ENCODE measurements at regions of chr3 and their contacts with region 1.

Region 1: DNA sequence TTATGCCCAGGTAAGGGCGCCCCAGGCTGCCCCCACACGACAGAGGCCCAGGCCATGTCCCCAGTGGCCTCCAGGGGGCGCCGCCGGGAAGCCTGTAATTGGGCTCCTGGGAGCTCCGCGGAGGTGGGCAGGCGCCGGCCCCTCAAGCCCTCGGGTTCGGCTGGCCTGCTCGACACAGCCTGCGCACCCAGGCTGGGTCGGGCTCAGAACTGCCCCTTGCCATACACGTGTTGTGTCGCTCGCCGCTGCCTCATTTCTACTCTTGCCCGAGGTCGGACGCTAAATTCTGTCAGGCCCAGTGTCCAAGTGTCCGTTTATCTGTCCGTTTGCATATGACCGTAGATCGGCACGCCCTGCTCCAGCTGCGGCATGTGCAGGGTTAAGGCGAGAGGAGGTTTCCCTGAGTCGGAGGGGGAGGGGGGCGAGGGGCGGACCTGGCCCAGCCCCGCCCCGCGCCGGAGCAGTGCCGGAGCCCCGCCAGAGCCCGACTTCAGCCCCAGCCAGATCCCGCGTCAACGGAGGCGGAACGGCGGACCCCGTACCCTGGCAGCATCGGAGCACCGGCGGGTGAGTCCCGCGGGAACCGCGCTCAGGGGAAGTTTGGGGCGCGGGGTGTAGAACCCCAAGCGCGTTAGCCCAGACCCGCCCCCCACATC is at the start of gene KLHDC8B:
- DNase-seq: peak; percentile 68 to 90 (median 84)
- ATAC-seq: peak; percentile 85
- H3K4me3 ChIP-seq: peak within 1 kb of the TSS; percentile 72 to 88
- H3K4me3 Mint-ChIP-seq: peak within 1 kb of the TSS; percentile 89
- H3K27ac ChIP-seq: peak within 1 kb of the TSS; percentile 3 to 40
- H3K27ac Mint-ChIP-seq: peak within 1 kb of the TSS; percentile 79
- H3K4me1 ChIP-seq: peaks cover 24% of the 10 kb centered on the region
- H3K4me1 Mint-ChIP-seq: peaks cover 25% of the 10 kb centered on the region
- H3K27me3 ChIP-seq: no peaks in the 10 kb centered on the region
- H3K27me3 Mint-ChIP-seq: no peaks in the 10 kb centered on the region
- CTCF ChIP-seq: peak; percentile 97
- total RNA-seq, gene KLHDC8B: 1.1 to 1.6 TPM

Region 2: GRCh38 chr3:49158108-49158709 is 13.0 kb before region 1 on chr3:
- CTCF ChIA-PET with region 1: interaction called, 16 read pairs
- POLR2A ChIA-PET with region 1: interaction called, 3 read pairs
- intact Hi-C with region 1: no loop called
- DNase-seq: peak; percentile 36 to 77 (median 65)
- ATAC-seq: peak; percentile 98
- H3K4me3 ChIP-seq: no peak overlapping the region
- H3K4me3 Mint-ChIP-seq: no peak overlapping the region
- H3K27ac ChIP-seq: no peak overlapping the region
- H3K27ac Mint-ChIP-seq: peak overlapping the region; percentile 85
- H3K4me1 ChIP-seq: no peaks in the 10 kb centered on the region
- H3K4me1 Mint-ChIP-seq: peaks cover 5% of the 10 kb centered on the region
- H3K27me3 ChIP-seq: no peaks in the 10 kb centered on the region
- H3K27me3 Mint-ChIP-seq: no peaks in the 10 kb centered on the region
- CTCF ChIP-seq: peak; percentile 61

Region 3: DNA sequence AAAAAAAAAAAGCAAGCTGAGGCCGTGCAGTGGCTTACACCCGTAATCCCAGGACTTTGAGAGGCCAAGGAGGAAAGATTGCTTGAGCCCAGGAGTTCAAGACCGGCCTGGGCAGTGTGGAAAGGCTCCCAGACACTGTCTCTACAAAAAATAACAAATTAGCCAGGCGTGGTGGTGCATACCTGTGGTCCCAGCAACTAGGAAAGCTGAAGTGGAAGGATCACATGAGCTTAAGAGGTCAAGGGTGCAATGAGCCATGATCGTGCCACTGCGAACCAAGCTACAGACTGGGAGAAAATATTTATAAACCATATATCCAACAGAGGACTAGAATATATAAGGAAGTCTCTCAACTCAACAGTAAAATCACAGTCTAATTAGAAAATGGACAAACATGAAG is 10.1 kb after region 1 on chr3:
- CTCF ChIA-PET with region 1: interaction called, 12 read pairs
- POLR2A ChIA-PET with region 1: no interaction called
- intact Hi-C with region 1: no loop called
- DNase-seq: no peak
- ATAC-seq: no peak
- H3K4me3 ChIP-seq: no peak overlapping the region
- H3K4me3 Mint-ChIP-seq: no peak overlapping the region
- H3K27ac ChIP-seq: no peak overlapping the region
- H3K27ac Mint-ChIP-seq: no peak overlapping the region
- H3K4me1 ChIP-seq: no peaks in the 10 kb centered on the region
- H3K4me1 Mint-ChIP-seq: peaks cover 5% of the 10 kb centered on the region
- H3K27me3 ChIP-seq: no peaks in the 10 kb centered on the region
- H3K27me3 Mint-ChIP-seq: peaks cover 10% of the 10 kb centered on the region
- CTCF ChIP-seq: no peak

Region 4: DNA sequence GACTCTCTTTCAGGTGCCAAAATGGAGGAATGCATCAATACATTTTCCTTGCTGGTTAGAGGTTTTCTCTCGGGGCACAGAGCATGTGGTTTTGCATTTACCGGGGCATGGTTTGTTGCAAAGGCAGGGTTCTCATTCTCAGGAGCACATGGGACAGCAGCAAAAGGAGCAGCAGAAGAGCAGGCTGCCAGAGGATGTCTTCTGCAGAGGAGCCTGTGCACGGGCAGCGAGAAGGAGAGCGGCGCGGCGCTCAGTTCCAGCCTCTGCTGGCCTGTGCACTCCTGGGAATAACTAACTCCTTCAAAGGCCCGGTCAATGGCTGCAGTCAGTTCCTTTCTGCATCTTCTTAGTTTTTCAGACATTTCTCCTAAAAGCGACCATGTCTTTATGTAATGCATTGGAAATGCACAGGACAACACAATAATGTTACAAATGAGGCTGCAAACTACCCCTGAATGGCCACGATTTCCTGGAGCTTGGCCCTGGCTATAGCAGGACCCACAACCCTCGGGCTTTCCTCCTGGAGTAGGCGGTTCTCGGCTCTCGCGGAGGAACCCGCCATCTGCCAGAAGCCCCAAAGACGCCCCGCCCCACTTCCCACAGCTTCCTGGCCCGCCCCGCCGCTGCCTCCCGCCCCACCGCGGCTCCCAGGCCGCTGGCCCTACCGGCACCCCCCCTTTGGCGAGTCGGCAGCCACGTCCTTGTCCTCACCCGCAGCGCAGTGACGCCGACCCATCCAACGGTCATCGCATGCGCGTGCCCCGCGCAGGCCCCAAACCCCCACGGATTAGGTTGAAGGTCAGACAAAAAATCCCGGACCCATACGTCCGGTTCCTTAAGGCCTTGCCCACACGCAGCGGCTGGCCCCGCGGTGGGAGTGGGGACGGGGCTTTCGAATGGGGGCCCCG is 105.5 kb after region 1 on chr3 and contains the start of gene C3orf62:
- CTCF ChIA-PET with region 1: no interaction called
- POLR2A ChIA-PET with region 1: no interaction called
- intact Hi-C with region 1: loop called (anchors 5 to 10 kb)
- DNase-seq: peak; percentile 27 to 81 (median 70)
- ATAC-seq: peak; percentile 91
- H3K4me3 ChIP-seq: peak within 1 kb of the TSS; percentile 45 to 46
- H3K4me3 Mint-ChIP-seq: peak within 1 kb of the TSS; percentile 88
- H3K27ac ChIP-seq: peak within 1 kb of the TSS; percentile 54 to 82
- H3K27ac Mint-ChIP-seq: peak within 1 kb of the TSS; percentile 89
- H3K4me1 ChIP-seq: peaks cover 11% of the 10 kb centered on the region
- H3K4me1 Mint-ChIP-seq: peaks cover 21% of the 10 kb centered on the region
- H3K27me3 ChIP-seq: no peaks in the 10 kb centered on the region
- H3K27me3 Mint-ChIP-seq: no peaks in the 10 kb centered on the region
- CTCF ChIP-seq: no peak
- total RNA-seq, gene C3orf62: 7.1 to 7.3 TPM

Region 5: GRCh38 chr3:49295489-49296058 is 124.3 kb after region 1 on chr3:
- CTCF ChIA-PET with region 1: interaction called, 8 read pairs
- POLR2A ChIA-PET with region 1: no interaction called
- intact Hi-C with region 1: loop called in 1 of 2 experiments (anchors 5 kb)
- DNase-seq: peak in 5 of 9 experiments; percentile 22 to 65 (median 46)
- ATAC-seq: peak; percentile 77
- H3K4me3 ChIP-seq: no peak overlapping the region
- H3K4me3 Mint-ChIP-seq: no peak overlapping the region
- H3K27ac ChIP-seq: no peak overlapping the region
- H3K27ac Mint-ChIP-seq: peak overlapping the region; percentile 37
- H3K4me1 ChIP-seq: no peaks in the 10 kb centered on the region
- H3K4me1 Mint-ChIP-seq: peaks cover 5% of the 10 kb centered on the region
- H3K27me3 ChIP-seq: no peaks in the 10 kb centered on the region
- H3K27me3 Mint-ChIP-seq: no peaks in the 10 kb centered on the region
- CTCF ChIP-seq: peak; percentile 78

Measured in CD8-positive, alpha-beta T cell (primary cell).